ENCODE measurements at regions of chr5 and their contacts with region 1.

Region 1: GRCh38 chr5:64612344-64612961 is 77.8 kb upstream of the SHISAL2B start:
- DNase-seq: no peak
- ATAC-seq: peak; percentile 47 to 71

Region 2: DNA sequence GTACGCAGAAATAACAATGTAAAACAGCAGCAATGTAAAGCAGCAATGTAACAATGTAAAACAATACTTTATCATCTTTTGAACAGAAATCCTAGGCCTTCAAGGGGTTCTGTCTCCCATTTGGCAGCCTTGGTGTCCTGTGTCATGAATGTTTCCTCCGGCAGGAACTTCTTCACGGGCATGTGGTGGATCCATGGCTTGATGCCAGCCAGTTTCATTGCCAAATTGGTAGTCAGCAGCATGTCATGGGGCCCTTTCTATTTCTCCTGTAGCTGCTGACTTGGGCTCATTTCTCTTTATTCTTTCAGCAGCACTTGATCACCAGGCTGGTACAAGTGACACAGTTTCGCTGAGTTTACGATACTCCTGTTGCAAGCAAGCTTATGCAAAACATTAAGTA is 925.5 kb before region 1 on chr5:
- intact Hi-C with region 1: no loop called
- DNase-seq: no peak
- ATAC-seq: no peak

Region 3: GRCh38 chr5:64158827-64159226 is 453.6 kb before region 1 on chr5:
- intact Hi-C with region 1: loop called in 1 of 2 experiments (anchors 10 kb)
- DNase-seq: no peak
- ATAC-seq: no peak

Region 4: GRCh38 chr5:64229163-64229774 is 383.2 kb before region 1 on chr5:
- intact Hi-C with region 1: loop called in 1 of 2 experiments (anchors 5 kb)
- DNase-seq: no peak
- ATAC-seq: no peak

Region 5: GRCh38 chr5:64811050-64811640 is 198.7 kb after region 1 on chr5:
- intact Hi-C with region 1: no loop called
- DNase-seq: no peak
- ATAC-seq: peak in 1 of 2 donors; percentile 65